ENCODE measurements at regions of chr19 and their contacts with region 1.

Region 1: DNA sequence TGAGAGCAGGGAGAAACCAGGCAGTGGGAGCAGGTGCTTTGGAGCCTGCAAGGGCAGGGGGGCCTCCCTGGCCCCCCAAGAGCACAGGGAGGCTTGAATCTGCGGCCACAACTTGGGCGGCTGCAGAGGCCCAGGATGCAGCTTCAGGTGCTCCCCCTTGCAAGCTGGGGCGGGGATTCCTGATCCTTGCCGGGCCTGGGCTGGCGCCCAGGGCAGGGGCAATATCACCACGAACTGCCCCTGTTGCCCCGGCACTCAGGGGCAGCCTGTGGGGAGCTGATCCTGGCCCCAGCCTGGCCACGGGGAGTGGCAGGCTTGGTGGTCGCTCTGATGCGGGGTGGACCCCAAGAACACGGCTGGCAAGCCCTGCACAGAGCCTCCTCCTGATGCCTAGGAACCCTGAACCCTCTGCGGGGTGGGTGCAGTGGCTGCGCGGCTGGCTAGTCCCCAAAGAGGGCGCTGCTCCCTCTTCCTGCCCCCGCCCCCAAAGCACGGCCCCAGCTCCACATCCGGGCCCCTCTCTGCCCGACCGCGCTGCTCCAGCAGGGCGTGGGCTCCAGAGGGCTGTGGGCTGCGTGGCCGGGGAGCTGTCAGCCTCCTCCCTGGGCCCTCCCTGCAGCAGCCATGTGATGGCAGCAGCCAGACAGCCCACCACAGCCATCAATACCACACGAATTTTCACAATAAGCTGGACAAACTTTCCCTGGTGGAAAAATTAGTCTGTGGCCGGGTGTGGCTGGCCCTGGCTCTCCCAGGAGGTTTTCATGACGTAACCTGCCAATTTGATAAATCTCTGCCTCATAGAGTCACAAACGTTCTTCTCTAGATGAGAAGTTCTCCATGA is 21.0 kb downstream of the TNFSF9 start:
- DNase-seq: peak; percentile 58 to 79 (median 65)
- H3K4me3 ChIP-seq: peak overlapping the region; percentile 47
- H3K4me3 Mint-ChIP-seq: peak overlapping the region; percentile 38 to 69 (median 55)
- H3K27ac ChIP-seq: no peak overlapping the region
- H3K27ac Mint-ChIP-seq: peak overlapping the region in 3 of 8 donors; percentile 41 to 70 (median 69)
- H3K4me1 ChIP-seq: peaks cover 11% of the 10 kb centered on the region
- H3K4me1 Mint-ChIP-seq: peaks cover 10 to 15% (median 10%) of the 10 kb centered on the region in 3 donors
- H3K27me3 ChIP-seq: no peaks in the 10 kb centered on the region
- H3K27me3 Mint-ChIP-seq: no peaks in the 10 kb centered on the region

Region 2: DNA sequence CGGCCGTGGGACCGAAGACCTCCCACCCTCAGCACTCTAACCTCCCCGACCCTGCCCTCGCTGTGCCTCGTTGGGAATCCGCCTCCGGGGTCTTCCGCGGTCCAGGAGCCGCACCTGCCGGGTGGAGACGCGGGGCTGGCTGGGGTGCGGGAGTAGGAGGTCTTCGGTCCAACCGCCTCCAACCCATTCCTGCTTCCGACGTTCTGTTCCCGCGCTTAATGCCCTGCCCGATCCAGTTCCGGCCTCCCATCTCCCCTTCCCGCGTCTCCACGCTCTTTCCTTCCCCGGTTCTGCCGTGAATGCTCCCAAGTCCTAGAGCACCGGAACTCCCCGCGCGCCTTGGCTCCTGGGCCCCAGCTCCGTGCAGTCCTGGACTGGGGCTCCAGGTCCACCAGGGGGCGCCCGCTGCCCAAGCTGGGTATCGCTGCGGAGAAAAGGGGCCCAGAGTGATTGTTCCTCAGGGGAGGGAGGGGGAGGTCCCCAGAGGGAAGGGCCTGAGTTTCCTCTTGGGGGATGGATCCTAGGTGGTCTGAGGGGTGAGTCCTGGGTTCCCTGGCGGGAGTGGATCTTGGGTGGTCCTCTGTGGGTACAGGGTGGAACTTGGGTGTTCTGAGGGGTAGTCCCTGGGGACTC is 35.1 kb before region 1 on chr19:
- CTCF ChIA-PET with region 1: interaction called, 13 read pairs
- POLR2A ChIA-PET with region 1: no interaction called
- DNase-seq: peak; percentile 81 to 93 (median 88)
- H3K4me3 ChIP-seq: peak overlapping the region; percentile 84
- H3K4me3 Mint-ChIP-seq: peak overlapping the region; percentile 92 to 98 (median 94)
- H3K27ac ChIP-seq: peak overlapping the region; percentile 70
- H3K27ac Mint-ChIP-seq: peak overlapping the region; percentile 13 to 96 (median 92)
- H3K4me1 ChIP-seq: peaks cover 16% of the 10 kb centered on the region
- H3K4me1 Mint-ChIP-seq: peaks cover 32 to 38% (median 33%) of the 10 kb centered on the region in 3 donors
- H3K27me3 ChIP-seq: no peaks in the 10 kb centered on the region
- H3K27me3 Mint-ChIP-seq: no peaks in the 10 kb centered on the region

Region 3: GRCh38 chr19:6535558-6536137 is 16.2 kb before region 1 on chr19:
- CTCF ChIA-PET with region 1: interaction called, 12 read pairs
- POLR2A ChIA-PET with region 1: interaction called, 3 read pairs
- DNase-seq: no peak
- H3K4me3 ChIP-seq: no peak overlapping the region
- H3K4me3 Mint-ChIP-seq: peak overlapping the region in 6 of 7 donors; percentile 53 to 76 (median 68)
- H3K27ac ChIP-seq: no peak overlapping the region
- H3K27ac Mint-ChIP-seq: peak overlapping the region; percentile 68 to 92 (median 78)
- H3K4me1 ChIP-seq: peaks cover 48% of the 10 kb centered on the region
- H3K4me1 Mint-ChIP-seq: peaks cover 37 to 54% (median 54%) of the 10 kb centered on the region in 3 donors
- H3K27me3 ChIP-seq: peaks cover 9% of the 10 kb centered on the region
- H3K27me3 Mint-ChIP-seq: peaks cover 18 to 27% of the 10 kb centered on the region in 2 donors